CD8-positive, alpha-beta T cell (primary cell): ENCODE measurements at regions of chr1 and their contacts with region 1.

Region 1: DNA sequence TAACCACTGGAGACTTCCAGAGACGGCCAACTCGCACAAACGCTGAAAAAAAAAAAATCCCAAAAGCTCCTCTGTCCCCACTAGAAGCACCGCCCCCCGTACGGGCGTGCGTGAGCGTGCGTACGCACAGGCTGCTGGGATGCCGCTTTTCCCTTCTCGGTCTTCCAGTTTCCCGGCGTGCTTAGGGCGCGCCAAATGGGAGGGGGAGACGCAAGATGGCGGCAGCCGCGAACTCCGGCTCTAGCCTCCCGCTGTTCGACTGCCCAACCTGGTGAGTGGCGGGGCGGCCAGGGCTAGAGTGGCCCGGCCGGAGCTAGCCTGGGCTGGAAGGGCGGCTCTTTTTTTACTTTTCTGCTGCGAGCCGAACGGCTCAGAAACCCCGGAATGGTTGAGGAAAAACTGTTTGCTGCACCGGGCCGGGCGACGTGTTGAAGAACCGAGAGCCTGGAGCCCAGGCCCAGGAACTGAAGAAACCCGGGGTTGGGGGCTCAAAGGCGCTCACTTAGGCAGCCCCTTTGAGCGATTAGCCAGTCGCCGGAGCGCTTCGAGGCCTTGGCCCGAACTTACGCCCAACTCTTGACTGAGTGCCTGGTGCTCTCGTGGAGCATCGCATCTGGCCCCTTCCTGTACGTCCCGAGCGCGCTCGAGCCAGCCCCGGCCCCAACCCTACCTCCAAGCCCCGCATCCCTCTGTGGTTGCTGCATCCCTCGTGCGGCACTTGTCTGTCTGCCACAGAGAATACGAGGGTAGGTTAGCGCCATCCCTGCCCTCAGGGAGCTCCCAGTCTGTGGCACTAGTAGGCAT is at the start of gene PPP1R8:
- DNase-seq: peak; percentile 69 to 96 (median 90)
- ATAC-seq: peak; percentile 99
- H3K4me3 ChIP-seq: peak within 1 kb of the TSS; percentile 91 to 99
- H3K4me3 Mint-ChIP-seq: peak within 1 kb of the TSS; percentile 91
- H3K27ac ChIP-seq: peak within 1 kb of the TSS; percentile 82 to 88
- H3K27ac Mint-ChIP-seq: peak within 1 kb of the TSS; percentile 91
- H3K4me1 ChIP-seq: peaks cover 25% of the 10 kb centered on the region
- H3K4me1 Mint-ChIP-seq: peaks cover 43% of the 10 kb centered on the region
- H3K27me3 ChIP-seq: no peaks in the 10 kb centered on the region
- H3K27me3 Mint-ChIP-seq: no peaks in the 10 kb centered on the region
- CTCF ChIP-seq: no peak
- total RNA-seq, gene PPP1R8: 24.9 to 25.3 TPM

Region 2: GRCh38 chr1:27772933-27773825 is 57.6 kb before region 1 on chr1 and contains the start of gene STX12:
- CTCF ChIA-PET with region 1: no interaction called
- POLR2A ChIA-PET with region 1: interaction called, 9 read pairs
- intact Hi-C with region 1: loop called (anchors 1 kb)
- DNase-seq: peak; percentile 96 to 100 (median 98)
- ATAC-seq: peak; percentile 91
- H3K4me3 ChIP-seq: peak within 1 kb of the TSS; percentile 94 to 98
- H3K4me3 Mint-ChIP-seq: peak within 1 kb of the TSS; percentile 91
- H3K27ac ChIP-seq: peak within 1 kb of the TSS; percentile 76 to 94
- H3K27ac Mint-ChIP-seq: peak within 1 kb of the TSS; percentile 98
- H3K4me1 ChIP-seq: peaks cover 16% of the 10 kb centered on the region
- H3K4me1 Mint-ChIP-seq: peaks cover 37% of the 10 kb centered on the region
- H3K27me3 ChIP-seq: no peaks in the 10 kb centered on the region
- H3K27me3 Mint-ChIP-seq: no peaks in the 10 kb centered on the region
- CTCF ChIP-seq: no peak
- total RNA-seq, gene STX12: 21.0 to 26.0 TPM

Region 3: DNA sequence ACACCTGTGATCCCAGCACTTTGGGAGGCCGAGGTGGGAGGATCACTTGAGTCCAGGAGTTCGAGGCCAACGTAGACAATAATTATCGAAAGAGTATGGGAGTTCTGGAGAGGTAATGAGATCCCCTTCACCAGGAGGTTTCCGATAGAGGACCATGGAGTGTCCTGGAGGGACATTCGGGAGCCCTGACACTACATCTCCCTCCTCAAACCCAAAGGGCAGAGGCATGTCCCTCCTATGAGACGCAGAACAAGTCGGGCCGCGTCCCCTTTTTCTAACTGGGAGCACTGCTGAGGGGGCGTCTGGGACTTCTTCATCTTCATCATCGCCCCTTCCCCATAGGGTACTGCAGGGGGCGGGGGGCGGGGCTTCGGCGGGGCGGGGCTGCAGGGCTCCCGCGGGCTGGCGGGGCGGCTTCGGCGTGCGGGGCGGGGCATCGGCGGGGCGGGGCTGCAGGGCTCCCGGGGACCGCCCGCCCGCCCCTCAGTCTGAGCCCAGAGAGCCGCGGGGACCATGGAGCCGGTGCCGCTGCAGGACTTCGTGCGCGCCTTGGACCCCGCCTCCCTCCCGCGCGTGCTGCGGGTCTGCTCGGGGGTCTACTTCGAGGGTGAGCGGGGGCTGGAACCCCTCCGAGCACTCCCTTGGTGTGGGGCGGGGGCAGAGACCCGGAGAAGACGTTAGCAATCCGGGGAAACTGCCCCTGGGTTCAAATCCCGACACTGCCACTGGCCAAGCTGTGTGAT is 41.4 kb after region 1 on chr1 and contains the start of gene THEMIS2:
- CTCF ChIA-PET with region 1: no interaction called
- POLR2A ChIA-PET with region 1: interaction called, 3 read pairs
- intact Hi-C with region 1: loop called (anchors 5 kb)
- DNase-seq: peak; percentile 58 to 86 (median 81)
- ATAC-seq: peak; percentile 83
- H3K4me3 ChIP-seq: peak within 1 kb of the TSS; percentile 83 to 100
- H3K4me3 Mint-ChIP-seq: peak within 1 kb of the TSS; percentile 98
- H3K27ac ChIP-seq: peak within 1 kb of the TSS; percentile 47 to 61
- H3K27ac Mint-ChIP-seq: peak within 1 kb of the TSS; percentile 89
- H3K4me1 ChIP-seq: peaks cover 46% of the 10 kb centered on the region
- H3K4me1 Mint-ChIP-seq: peaks cover 49% of the 10 kb centered on the region
- H3K27me3 ChIP-seq: no peaks in the 10 kb centered on the region
- H3K27me3 Mint-ChIP-seq: no peaks in the 10 kb centered on the region
- CTCF ChIP-seq: no peak
- total RNA-seq, gene THEMIS2: 13.4 to 15.2 TPM

Region 4: GRCh38 chr1:27884006-27884954 is 53.5 kb after region 1 on chr1:
- CTCF ChIA-PET with region 1: no interaction called
- POLR2A ChIA-PET with region 1: no interaction called
- intact Hi-C with region 1: no loop called
- DNase-seq: peak in 3 of 9 experiments; percentile 9 to 51 (median 46)
- ATAC-seq: no peak
- H3K4me3 ChIP-seq: no peak overlapping the region
- H3K4me3 Mint-ChIP-seq: no peak overlapping the region
- H3K27ac ChIP-seq: peak overlapping the region in 1 of 2 experiments; percentile 70
- H3K27ac Mint-ChIP-seq: peak overlapping the region; percentile 70
- H3K4me1 ChIP-seq: peaks cover 44% of the 10 kb centered on the region
- H3K4me1 Mint-ChIP-seq: peaks cover 57% of the 10 kb centered on the region
- H3K27me3 ChIP-seq: no peaks in the 10 kb centered on the region
- H3K27me3 Mint-ChIP-seq: no peaks in the 10 kb centered on the region
- CTCF ChIP-seq: no peak

Region 5: DNA sequence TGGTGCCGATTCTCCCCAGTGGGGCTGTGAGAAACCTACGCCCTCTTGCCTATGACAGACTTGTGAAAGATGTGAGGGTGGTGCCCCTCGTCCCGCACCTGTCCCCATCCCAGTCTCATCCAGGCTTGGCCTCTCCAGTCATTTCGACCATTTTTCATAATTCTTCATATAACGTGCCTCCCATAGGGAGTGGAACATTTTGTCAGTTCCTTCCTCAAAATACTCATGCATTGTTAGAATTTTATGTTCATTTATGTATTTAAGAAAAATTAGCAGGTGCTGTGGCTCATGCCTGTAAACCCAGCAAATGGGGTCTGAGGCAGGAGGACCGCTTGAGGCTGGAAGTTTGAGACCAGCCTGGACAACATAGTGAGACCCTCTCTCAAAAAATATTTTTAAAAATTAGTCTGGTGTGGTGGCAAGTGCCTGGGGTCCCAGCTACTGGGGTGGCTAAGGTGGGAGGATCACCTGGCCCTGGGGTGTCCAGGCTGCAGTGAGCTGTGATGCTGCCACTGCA is 84.3 kb after region 1 on chr1:
- CTCF ChIA-PET with region 1: no interaction called
- POLR2A ChIA-PET with region 1: no interaction called
- intact Hi-C with region 1: loop called in 1 of 2 experiments (anchors 1 kb)
- DNase-seq: no peak
- ATAC-seq: no peak
- H3K4me3 ChIP-seq: peak overlapping the region; percentile 1 to 90
- H3K4me3 Mint-ChIP-seq: peak overlapping the region; percentile 94
- H3K27ac ChIP-seq: peak overlapping the region; percentile 81 to 92
- H3K27ac Mint-ChIP-seq: peak overlapping the region; percentile 96
- H3K4me1 ChIP-seq: peaks cover 4% of the 10 kb centered on the region
- H3K4me1 Mint-ChIP-seq: peaks cover 21% of the 10 kb centered on the region
- H3K27me3 ChIP-seq: no peaks in the 10 kb centered on the region
- H3K27me3 Mint-ChIP-seq: no peaks in the 10 kb centered on the region
- CTCF ChIP-seq: no peak